Prostate gland (tissue), 2 donors: ENCODE measurements at regions of chr6 and their contacts with region 1.

Region 1: GRCh38 chr6:139597771-139598755 is 223.6 kb upstream of the CITED2 start:
- DNase-seq: peak; percentile 32
- H3K4me3 ChIP-seq: no peak overlapping the region
- H3K27ac ChIP-seq: peak overlapping the region; percentile 47 to 60
- H3K4me1 ChIP-seq: peaks cover 8% of the 10 kb centered on the region
- H3K27me3 ChIP-seq: no peaks in the 10 kb centered on the region
- CTCF ChIP-seq: no peak
- POLR2A ChIP-seq: no peak

Region 2: DNA sequence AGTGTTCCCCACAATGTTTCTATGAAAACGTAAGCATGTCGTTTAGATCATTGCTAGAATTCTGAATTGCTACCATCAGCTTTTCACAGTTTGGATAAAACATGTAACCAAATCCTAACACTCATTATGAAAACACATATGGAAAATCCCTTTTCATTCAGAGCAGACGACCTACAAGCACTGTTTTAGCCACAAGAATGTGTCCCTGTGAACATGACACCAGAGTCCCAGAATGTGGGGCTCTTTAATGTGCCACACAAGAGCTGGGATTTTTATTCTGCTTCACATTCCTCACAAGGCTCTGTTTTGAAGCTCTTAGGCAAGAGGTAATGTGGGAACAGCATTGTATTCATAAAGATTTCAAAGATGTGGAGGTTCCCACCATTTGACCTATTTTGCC is 82.6 kb before region 1 on chr6:
- intact Hi-C with region 1: no loop called
- DNase-seq: no peak
- H3K4me3 ChIP-seq: no peak overlapping the region
- H3K27ac ChIP-seq: no peak overlapping the region
- H3K4me1 ChIP-seq: no peaks in the 10 kb centered on the region
- H3K27me3 ChIP-seq: no peaks in the 10 kb centered on the region
- CTCF ChIP-seq: no peak
- POLR2A ChIP-seq: no peak

Region 3: DNA sequence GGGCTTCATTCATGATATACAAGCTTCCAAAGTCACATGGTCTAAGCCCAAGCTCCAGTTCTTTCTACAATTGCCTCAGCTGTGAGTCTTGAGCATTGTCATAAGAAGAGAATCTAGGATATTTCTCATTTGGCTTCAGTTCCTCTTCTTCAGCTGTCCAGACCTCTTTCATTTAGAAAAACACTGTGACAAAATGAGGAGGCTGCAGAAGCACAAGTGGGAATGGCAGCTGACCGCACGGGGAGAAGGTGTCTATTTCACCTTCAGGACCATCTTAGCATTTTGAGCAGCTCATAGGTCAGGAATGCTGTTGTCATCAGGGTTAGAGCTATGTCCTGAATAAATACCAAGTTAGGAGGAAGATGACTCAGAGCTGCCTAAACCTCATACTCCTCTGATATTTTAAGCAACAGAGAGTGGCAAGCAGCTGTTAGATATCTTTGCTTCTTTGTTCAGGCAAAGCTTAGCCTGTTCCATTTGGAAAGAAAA is 166.5 kb after region 1 on chr6:
- intact Hi-C with region 1: loop called (anchors 5 kb)
- DNase-seq: no peak
- H3K4me3 ChIP-seq: no peak overlapping the region
- H3K27ac ChIP-seq: peak overlapping the region; percentile 26 to 38
- H3K4me1 ChIP-seq: no peaks in the 10 kb centered on the region
- H3K27me3 ChIP-seq: no peaks in the 10 kb centered on the region
- CTCF ChIP-seq: no peak
- POLR2A ChIP-seq: no peak

Region 4: GRCh38 chr6:139790527-139790926 is 192.5 kb after region 1 on chr6:
- intact Hi-C with region 1: no loop called
- DNase-seq: no peak
- H3K4me3 ChIP-seq: no peak overlapping the region
- H3K27ac ChIP-seq: no peak overlapping the region
- H3K4me1 ChIP-seq: no peaks in the 10 kb centered on the region
- H3K27me3 ChIP-seq: no peaks in the 10 kb centered on the region
- CTCF ChIP-seq: no peak
- POLR2A ChIP-seq: no peak